Motor neuron (in vitro differentiated cells): ENCODE measurements at regions of chr17 and their contacts with region 1.

Region 1: DNA sequence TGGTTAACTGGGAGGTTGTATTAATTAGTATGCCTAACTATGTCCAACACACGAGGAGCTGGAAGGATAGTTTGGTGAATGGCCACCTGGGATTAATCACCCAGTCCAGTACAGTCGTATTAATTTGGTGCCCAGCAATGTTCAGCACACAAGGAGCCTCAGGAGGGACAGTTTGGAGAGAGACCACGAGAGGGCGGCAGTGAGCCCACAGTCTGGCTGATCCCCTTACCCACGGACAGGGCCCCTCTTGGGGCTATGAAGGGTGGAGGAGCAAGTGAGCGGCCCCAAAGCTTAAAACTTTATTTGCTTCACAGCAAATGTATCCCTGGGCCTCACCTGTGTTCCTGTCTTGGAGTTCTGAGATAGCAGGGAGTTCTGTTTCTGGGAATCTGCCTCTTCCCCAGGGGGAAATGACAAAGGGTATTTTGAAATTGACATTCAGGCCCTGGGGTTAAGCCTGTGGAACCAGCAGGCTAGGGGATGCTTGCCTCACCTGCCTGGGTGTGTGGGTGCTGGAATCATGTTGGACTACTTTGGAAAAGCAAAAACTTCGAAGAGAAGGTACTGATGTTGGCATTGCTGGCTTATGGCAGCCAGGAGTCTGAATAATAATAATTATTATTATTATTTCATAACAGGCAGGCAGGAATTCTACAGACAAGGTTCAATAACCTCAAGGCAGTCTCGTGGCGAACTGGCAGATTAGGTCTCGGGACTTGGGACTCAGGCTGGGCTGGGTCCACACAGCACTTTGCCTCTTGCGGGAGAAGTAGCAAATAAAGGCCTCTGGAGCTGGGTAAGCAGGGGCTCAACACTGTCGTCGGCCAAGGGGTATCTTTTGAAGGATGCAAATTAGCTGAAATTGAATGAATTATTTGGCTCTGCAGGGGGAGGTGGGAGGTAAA is 227.6 kb upstream of the ASIC2 start:
- ATAC-seq: peak in 6 of 8 experiments; percentile 63 to 92 (median 82)
- H3K4me3 ChIP-seq: no peak overlapping the region
- H3K27ac ChIP-seq: no peak overlapping the region
- H3K4me1 ChIP-seq: peaks cover 0 to 12% of the 10 kb centered on the region in 2 donors

Region 2: GRCh38 chr17:33401249-33401648 is 119.4 kb before region 1 on chr17:
- in situ Hi-C with region 1: no loop called
- ATAC-seq: no peak
- H3K4me3 ChIP-seq: no peak overlapping the region
- H3K27ac ChIP-seq: no peak overlapping the region
- H3K4me1 ChIP-seq: peaks cover 0 to 8% of the 10 kb centered on the region in 2 donors

Region 3: GRCh38 chr17:33602981-33603380 is 82.3 kb after region 1 on chr17:
- in situ Hi-C with region 1: loop called in 1 of 9 experiments (anchors 25 kb)
- ATAC-seq: peak in 5 of 8 experiments; percentile 70 to 100 (median 84)
- H3K4me3 ChIP-seq: no peak overlapping the region
- H3K27ac ChIP-seq: no peak overlapping the region
- H3K4me1 ChIP-seq: peaks cover 0 to 8% of the 10 kb centered on the region in 2 donors

Region 4: DNA sequence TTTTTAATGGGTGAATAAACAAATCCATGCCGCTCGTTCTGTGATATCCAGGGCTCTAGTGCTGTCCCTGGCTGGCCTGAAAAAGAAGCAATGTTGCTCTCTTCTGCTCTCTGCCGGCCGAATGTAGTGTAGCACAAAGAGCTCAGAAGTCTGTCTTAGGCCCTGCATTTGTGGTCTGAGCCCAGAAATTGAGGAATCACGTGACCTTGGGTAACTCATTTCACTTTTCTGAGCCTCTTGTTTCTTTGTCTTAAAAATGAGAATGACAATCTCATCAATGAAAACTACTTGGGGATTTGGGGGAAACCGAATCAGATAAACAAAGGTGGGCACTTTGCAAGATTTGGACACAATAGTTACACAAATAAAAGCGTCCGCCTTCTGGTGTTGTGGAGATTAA is 154.0 kb after region 1 on chr17:
- in situ Hi-C with region 1: loop called in 1 of 9 experiments (anchors 25 kb)
- ATAC-seq: peak; percentile 67 to 97 (median 88)
- H3K4me3 ChIP-seq: no peak overlapping the region
- H3K27ac ChIP-seq: no peak overlapping the region
- H3K4me1 ChIP-seq: no peaks in the 10 kb centered on the region

Region 5: DNA sequence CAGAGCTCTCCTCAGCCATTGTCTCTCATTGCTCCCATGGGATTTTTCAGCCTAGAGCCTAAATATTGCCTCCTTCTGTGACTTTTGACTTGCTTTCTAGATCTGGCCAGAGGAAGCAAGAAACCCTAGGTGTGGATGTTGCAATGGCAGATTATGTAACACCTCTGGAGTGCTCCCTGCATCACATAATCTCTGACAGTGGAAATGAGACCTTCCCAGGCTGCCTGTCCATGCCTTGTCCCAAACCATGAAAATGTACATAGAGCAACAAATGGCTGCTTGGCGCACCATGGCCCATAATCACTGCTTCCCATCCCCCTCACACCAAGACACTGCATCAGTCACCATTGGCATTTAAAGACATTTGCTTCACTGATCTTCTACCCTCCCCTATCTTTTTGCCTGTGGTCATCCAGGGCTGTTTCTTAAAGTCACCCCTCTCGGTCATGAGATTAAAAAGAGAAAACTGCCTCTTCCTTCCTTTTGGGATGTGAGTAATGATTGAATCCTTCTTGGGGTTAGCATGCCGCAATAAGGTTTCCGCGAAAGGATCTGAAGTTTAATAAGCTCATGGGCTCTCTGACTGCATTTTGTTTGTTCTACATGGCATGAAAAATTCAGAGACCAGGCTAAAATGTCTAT is 700.2 kb after region 1 on chr17:
- in situ Hi-C with region 1: no loop called
- ATAC-seq: no peak
- H3K4me3 ChIP-seq: no peak overlapping the region
- H3K27ac ChIP-seq: no peak overlapping the region
- H3K4me1 ChIP-seq: no peaks in the 10 kb centered on the region